ENCODE measurements at regions of chr3 and their contacts with region 1.

Region 1: DNA sequence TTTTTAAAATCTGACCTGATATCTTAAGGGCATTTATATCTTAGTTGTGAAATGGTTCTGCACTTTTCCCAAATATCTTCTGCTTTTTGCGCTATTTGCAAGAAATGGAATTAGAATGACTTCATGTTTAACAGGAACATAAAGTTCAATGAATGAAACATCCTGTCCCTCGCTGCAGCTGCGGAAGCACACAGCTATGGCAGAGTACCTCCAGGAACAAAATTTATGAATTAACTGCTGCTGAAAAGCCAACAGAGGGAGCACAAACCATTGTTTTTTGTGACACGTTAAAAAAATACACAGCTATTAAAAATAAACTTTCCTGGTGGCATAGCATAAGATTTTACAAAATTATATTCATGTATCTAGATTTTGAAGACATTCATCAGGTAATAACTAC is 404.4 kb upstream of the MDFIC2 start:
- DNase-seq: peak; percentile 48
- ATAC-seq: peak; percentile 69
- H3K4me3 ChIP-seq: no peak overlapping the region
- H3K27ac ChIP-seq: no peak overlapping the region
- H3K4me1 ChIP-seq: no peaks in the 10 kb centered on the region
- H3K27me3 ChIP-seq: no peaks in the 10 kb centered on the region; the same call in 1 of the 2 replicates
- CTCF ChIP-seq: peak; percentile 52
- POLR2A ChIP-seq: no peak
- RAD21 ChIP-seq: peak; percentile 58

Region 2: DNA sequence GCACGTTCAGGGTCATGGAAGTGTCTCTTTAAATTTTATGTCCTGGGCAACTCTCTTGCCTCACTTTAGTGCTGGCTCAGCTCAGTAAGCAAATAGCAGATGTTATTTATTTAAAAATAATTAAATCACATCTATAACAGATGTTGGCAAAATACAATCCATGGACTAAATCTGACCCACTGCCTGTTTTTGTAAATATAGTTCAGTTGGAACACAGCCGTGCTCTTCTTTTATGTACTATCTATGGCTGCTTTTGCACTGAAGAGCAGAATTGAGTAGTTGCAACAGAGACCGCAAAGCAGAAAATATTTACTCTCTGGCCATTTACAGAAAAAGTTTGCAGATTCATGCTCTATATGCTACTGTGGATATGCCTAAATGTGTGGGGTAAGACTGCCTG is 638.1 kb before region 1 on chr3:
- CTCF ChIA-PET with region 1: no interaction called
- POLR2A ChIA-PET with region 1: no interaction called
- dilution Hi-C with region 1: no loop called
- in situ Hi-C with region 1: no loop called
- intact Hi-C with region 1: no loop called
- DNase-seq: no peak
- ATAC-seq: no peak
- H3K4me3 ChIP-seq: no peak overlapping the region
- H3K27ac ChIP-seq: no peak overlapping the region
- H3K4me1 ChIP-seq: no peaks in the 10 kb centered on the region
- H3K27me3 ChIP-seq: peaks cover 24% of the 10 kb centered on the region
- CTCF ChIP-seq: no peak
- POLR2A ChIP-seq: no peak
- RAD21 ChIP-seq: no peak

Region 3: DNA sequence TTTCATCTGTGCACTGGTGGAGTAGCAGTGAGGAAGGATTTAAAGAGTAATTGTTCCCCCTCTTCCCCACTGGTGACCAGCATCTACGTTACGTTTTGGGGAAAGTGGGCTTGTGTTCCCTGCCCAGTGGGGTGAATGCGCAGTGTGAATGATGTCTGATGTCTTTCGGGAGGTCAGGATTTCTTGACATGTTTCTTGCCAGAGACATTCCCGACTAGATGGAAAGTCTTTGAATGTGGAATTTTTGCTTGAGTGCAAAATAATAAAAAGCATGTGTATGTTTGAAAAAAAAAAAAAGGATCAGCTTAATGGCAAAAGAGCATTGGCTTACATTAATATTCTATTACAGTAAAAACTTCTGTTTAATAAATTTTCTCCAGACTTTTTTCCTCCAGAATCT is 234.5 kb after region 1 on chr3:
- CTCF ChIA-PET with region 1: no interaction called
- POLR2A ChIA-PET with region 1: no interaction called
- dilution Hi-C with region 1: no loop called
- in situ Hi-C with region 1: no loop called
- intact Hi-C with region 1: loop called (anchors 5 kb)
- DNase-seq: no peak
- ATAC-seq: no peak
- H3K4me3 ChIP-seq: no peak overlapping the region
- H3K27ac ChIP-seq: no peak overlapping the region
- H3K4me1 ChIP-seq: no peaks in the 10 kb centered on the region; the same call in 1 of the 2 replicates
- H3K27me3 ChIP-seq: no peaks in the 10 kb centered on the region
- CTCF ChIP-seq: no peak
- POLR2A ChIP-seq: no peak
- RAD21 ChIP-seq: no peak

Region 4: GRCh38 chr3:71130471-71131374 is 413.9 kb after region 1 on chr3:
- CTCF ChIA-PET with region 1: no interaction called
- POLR2A ChIA-PET with region 1: no interaction called
- dilution Hi-C with region 1: no loop called
- in situ Hi-C with region 1: no loop called
- intact Hi-C with region 1: loop called (anchors 5 kb)
- DNase-seq: peak; percentile 83
- ATAC-seq: peak; percentile 66
- H3K4me3 ChIP-seq: peak overlapping the region; percentile 64
- H3K27ac ChIP-seq: peak overlapping the region; percentile 99
- H3K4me1 ChIP-seq: peaks cover 11% of the 10 kb centered on the region
- H3K27me3 ChIP-seq: no peaks in the 10 kb centered on the region
- CTCF ChIP-seq: no peak
- POLR2A ChIP-seq: peak; percentile 64; the same call in 1 of the 2 replicates
- RAD21 ChIP-seq: peak; percentile 27; the same call in 1 of the 2 replicates

Region 5: GRCh38 chr3:71601811-71602210 is 885.0 kb after region 1 on chr3:
- CTCF ChIA-PET with region 1: interaction called, 3 read pairs
- POLR2A ChIA-PET with region 1: no interaction called
- dilution Hi-C with region 1: no loop called
- in situ Hi-C with region 1: loop called (anchors 25 kb)
- intact Hi-C with region 1: no loop called
- DNase-seq: peak; percentile 69
- ATAC-seq: peak; percentile 25; the same call in 1 of the 2 replicates
- H3K4me3 ChIP-seq: no peak overlapping the region
- H3K27ac ChIP-seq: no peak overlapping the region
- H3K4me1 ChIP-seq: peaks cover 6% of the 10 kb centered on the region; the same call in 1 of the 2 replicates
- H3K27me3 ChIP-seq: no peaks in the 10 kb centered on the region
- CTCF ChIP-seq: no peak
- POLR2A ChIP-seq: no peak
- RAD21 ChIP-seq: no peak